ENCODE measurements at regions of chr21 and their contacts with region 1.

Region 1: DNA sequence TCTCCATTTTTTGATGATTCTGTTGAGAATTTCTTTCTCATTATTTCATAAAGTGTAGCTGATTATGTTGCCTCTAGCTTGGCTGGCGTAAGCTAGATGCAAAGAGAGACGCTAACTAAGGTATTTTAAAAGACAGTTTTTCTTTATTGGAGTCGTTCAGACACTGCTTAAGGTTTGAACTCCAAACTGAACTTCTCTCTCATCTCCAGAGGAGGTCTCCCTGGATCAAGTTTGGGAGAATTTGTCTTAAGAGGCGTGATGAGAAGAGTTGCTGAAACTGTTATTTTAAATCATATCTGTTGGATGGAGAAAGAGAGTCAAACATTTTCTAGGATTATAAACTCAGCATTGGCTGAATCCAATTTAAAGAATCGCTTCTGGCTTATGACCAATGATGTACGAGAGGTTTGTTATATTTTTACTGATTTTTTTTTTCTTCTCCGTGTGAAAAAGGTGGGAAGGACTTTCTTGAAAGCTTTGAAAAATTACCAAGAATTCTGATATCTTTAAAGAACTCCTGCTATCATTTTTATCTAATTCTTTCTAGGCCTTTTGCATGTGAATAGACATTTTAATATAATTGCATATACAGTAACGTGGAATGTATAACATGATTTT is 34.0 kb downstream of the MAP3K7CL start:
- DNase-seq: no peak
- ATAC-seq: peak; percentile 89

Region 2: DNA sequence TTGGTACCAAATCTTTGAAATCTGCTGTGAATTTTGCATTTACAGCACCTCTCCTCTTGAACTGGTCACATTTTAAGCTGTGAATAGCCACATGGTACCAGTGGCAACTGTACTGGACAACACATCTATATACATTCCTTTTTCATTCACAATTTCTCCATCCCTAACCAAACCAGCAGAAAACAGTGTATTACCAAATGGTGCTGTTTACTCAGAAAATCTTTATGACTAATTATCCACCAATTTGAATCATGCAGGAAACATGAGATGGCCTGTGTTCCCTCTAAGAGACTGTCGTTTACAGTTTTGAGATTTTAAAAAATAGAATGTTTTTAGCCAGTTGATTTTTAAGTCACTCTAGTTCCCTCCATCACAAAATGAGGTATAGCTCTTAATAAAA is 73.4 kb before region 1 on chr21:
- intact Hi-C with region 1: loop called in 1 of 2 experiments (anchors 10 kb)
- DNase-seq: no peak
- ATAC-seq: no peak

Region 3: GRCh38 chr21:29347274-29347681 is 182.8 kb after region 1 on chr21:
- intact Hi-C with region 1: loop called in 1 of 2 experiments (anchors 5 kb)
- DNase-seq: no peak
- ATAC-seq: peak; percentile 22

Region 4: GRCh38 chr21:29372063-29372802 is 207.8 kb after region 1 on chr21:
- intact Hi-C with region 1: loop called in 1 of 2 experiments (anchors 5 kb)
- DNase-seq: peak in 1 of 2 donors; percentile 33
- ATAC-seq: peak; percentile 89